CD4-positive, alpha-beta T cell (primary cell): ENCODE measurements at regions of chr10 and their contacts with region 1.

Region 1: GRCh38 chr10:68720793-68721672 is at the start of gene CCAR1:
- DNase-seq: peak; percentile 92 to 99 (median 96)
- ATAC-seq: peak; percentile 94
- H3K4me3 ChIP-seq: peak within 1 kb of the TSS; percentile 93
- H3K4me3 Mint-ChIP-seq: peak within 1 kb of the TSS; percentile 100
- H3K27ac ChIP-seq: peak within 1 kb of the TSS; percentile 85 to 89
- H3K27ac Mint-ChIP-seq: peak within 1 kb of the TSS; percentile 98
- H3K4me1 ChIP-seq: peaks cover 16% of the 10 kb centered on the region
- H3K4me1 Mint-ChIP-seq: peaks cover 16% of the 10 kb centered on the region
- H3K27me3 ChIP-seq: no peaks in the 10 kb centered on the region
- H3K27me3 Mint-ChIP-seq: no peaks in the 10 kb centered on the region
- CTCF ChIP-seq: no peak
- total RNA-seq, gene CCAR1: 68.9 to 82.2 TPM

Region 2: DNA sequence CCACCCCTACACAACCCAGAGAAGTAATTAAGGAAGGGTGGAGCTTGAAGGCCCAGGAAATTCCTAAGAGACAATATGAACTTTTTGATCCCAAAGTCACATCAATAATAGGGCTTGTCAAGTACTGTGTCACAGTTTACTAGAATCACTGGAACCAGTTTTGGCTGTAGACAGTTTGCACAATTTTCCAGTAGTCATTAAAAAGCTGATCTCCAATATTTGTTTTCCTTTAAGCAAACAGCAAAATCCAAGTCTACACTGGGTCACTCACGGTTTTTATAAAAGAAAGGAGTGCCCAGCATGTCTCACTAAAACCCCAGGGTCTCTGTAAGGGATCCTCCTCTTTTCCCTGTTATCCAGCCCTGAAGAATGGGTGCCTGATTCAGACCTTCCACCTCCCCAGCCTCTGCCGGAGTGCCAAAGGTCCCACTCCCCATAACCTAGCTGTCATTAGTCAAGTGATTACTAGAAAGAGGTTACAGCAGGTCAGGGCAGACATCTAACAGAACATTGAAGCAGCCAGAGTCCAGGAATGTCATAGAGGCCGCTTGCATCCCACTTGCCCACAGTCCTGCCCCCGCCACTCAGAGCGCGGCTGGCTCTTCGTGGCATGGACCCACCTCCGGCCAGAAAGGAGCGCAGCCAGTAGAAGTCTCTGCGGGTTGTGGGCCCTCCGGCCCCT is 194.3 kb before region 1 on chr10:
- CTCF ChIA-PET with region 1: no interaction called
- POLR2A ChIA-PET with region 1: interaction called, 3 read pairs
- intact Hi-C with region 1: loop called (anchors 2 to 10 kb)
- DNase-seq: no peak
- ATAC-seq: peak; percentile 10
- H3K4me3 ChIP-seq: peak overlapping the region; percentile 68
- H3K4me3 Mint-ChIP-seq: peak overlapping the region; percentile 88
- H3K27ac ChIP-seq: peak overlapping the region; percentile 82 to 90
- H3K27ac Mint-ChIP-seq: peak overlapping the region; percentile 96
- H3K4me1 ChIP-seq: peaks cover 16% of the 10 kb centered on the region
- H3K4me1 Mint-ChIP-seq: peaks cover 13% of the 10 kb centered on the region
- H3K27me3 ChIP-seq: no peaks in the 10 kb centered on the region
- H3K27me3 Mint-ChIP-seq: no peaks in the 10 kb centered on the region
- CTCF ChIP-seq: no peak

Region 3: GRCh38 chr10:68550747-68551411 is 170.2 kb before region 1 on chr10:
- CTCF ChIA-PET with region 1: no interaction called
- POLR2A ChIA-PET with region 1: no interaction called
- intact Hi-C with region 1: loop called in 1 of 2 experiments (anchors 10 kb)
- DNase-seq: peak in 8 of 14 experiments; percentile 6 to 72 (median 25)
- ATAC-seq: peak; percentile 76
- H3K4me3 ChIP-seq: no peak overlapping the region
- H3K4me3 Mint-ChIP-seq: no peak overlapping the region
- H3K27ac ChIP-seq: no peak overlapping the region
- H3K27ac Mint-ChIP-seq: no peak overlapping the region
- H3K4me1 ChIP-seq: no peaks in the 10 kb centered on the region
- H3K4me1 Mint-ChIP-seq: no peaks in the 10 kb centered on the region
- H3K27me3 ChIP-seq: no peaks in the 10 kb centered on the region
- H3K27me3 Mint-ChIP-seq: no peaks in the 10 kb centered on the region
- CTCF ChIP-seq: peak; percentile 71

Region 4: GRCh38 chr10:68600041-68600778 is 120.8 kb before region 1 on chr10:
- CTCF ChIA-PET with region 1: no interaction called
- POLR2A ChIA-PET with region 1: interaction called, 13 read pairs
- intact Hi-C with region 1: no loop called
- DNase-seq: peak; percentile 24 to 69 (median 38)
- ATAC-seq: peak; percentile 93
- H3K4me3 ChIP-seq: peak overlapping the region; percentile 60
- H3K4me3 Mint-ChIP-seq: peak overlapping the region; percentile 90
- H3K27ac ChIP-seq: no peak overlapping the region
- H3K27ac Mint-ChIP-seq: peak overlapping the region; percentile 79
- H3K4me1 ChIP-seq: peaks cover 10% of the 10 kb centered on the region
- H3K4me1 Mint-ChIP-seq: peaks cover 51% of the 10 kb centered on the region
- H3K27me3 ChIP-seq: no peaks in the 10 kb centered on the region
- H3K27me3 Mint-ChIP-seq: no peaks in the 10 kb centered on the region
- CTCF ChIP-seq: no peak